Activated B cell treated with CpG ODN at 0.5 μM for 24 hours (primary cell): ENCODE measurements at regions of chr2 and their contacts with region 1.

Region 1: DNA sequence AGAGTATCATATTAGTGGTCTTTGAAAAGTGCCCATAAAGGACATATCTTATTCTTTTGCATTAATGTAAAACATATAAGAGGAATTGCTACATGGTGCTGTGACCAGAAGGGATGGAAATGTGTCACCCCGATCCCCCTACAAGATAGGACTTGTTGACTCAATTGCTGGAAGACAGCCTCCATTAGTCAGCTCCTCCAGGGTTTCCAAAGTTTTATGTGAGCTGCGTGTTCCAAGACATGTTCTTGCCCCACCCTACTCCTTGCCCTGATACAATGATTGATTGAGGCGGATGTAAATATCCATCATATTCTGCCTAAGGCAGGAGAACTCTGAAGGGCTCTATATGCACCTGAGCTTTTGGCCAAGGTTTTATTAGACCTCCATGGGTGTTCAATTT is 541.0 kb upstream of the ZEB2 start:
- DNase-seq: no peak
- ATAC-seq: no peak
- H3K4me3 Mint-ChIP-seq: no peak overlapping the region
- H3K27ac Mint-ChIP-seq: no peak overlapping the region
- H3K4me1 Mint-ChIP-seq: no peaks in the 10 kb centered on the region
- H3K27me3 Mint-ChIP-seq: no peaks in the 10 kb centered on the region
- CTCF ChIP-seq: no peak

Region 2: DNA sequence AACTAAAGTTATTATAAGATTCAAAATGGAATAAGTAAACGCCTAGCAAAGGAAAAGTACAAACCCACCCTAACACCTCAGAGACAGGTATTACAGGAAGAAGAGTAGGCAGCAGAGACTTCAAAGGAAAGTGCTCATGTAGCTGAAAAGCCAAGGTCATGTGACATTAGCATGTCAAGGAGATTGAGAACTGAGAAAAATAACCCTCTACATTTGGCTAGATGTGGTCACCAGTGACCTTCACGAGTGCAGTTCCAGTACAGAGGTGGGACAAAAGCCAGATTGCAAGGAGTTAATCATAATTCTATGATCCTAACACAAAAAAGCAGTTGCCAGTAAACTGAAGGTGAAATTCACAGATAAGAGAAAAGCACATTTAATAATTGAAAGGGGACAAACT is 793.6 kb before region 1 on chr2:
- CTCF ChIA-PET with region 1: no interaction called
- POLR2A ChIA-PET with region 1: no interaction called
- intact Hi-C with region 1: no loop called
- DNase-seq: no peak
- ATAC-seq: no peak
- H3K4me3 Mint-ChIP-seq: no peak overlapping the region
- H3K27ac Mint-ChIP-seq: no peak overlapping the region
- H3K4me1 Mint-ChIP-seq: peaks cover 30% of the 10 kb centered on the region
- H3K27me3 Mint-ChIP-seq: no peaks in the 10 kb centered on the region
- CTCF ChIP-seq: no peak

Region 3: DNA sequence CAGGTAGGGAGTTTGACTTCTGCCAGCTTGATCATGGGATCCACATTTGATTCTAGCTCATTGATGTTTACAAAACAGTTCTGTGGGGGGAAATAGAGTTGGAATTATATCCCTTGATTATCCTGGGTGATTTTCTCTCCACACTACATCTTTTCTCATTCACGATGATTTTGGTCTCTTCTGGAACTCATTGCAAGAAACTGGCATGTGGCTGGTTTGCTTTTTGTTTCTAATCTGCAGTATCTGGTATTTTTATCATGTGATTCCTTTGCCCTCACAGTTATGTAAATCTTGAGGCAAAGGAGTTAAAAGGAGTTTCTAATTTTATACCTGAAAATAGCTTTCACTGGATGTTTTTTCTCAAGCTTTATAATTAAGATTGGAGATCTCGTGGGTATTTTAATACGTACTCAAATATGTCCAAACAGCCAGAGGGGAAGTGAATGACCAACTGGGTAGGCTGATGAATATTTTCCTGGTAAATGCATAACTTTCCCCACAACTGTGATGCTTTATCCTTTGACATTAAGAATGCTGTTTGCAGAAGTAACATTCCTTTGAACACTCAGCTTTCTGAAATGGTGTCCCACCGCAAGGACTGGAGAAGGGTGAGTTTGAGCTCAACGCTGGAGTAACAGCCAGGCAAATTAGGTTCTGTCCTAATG is 38.1 kb before region 1 on chr2:
- CTCF ChIA-PET with region 1: no interaction called
- POLR2A ChIA-PET with region 1: no interaction called
- intact Hi-C with region 1: no loop called
- DNase-seq: no peak
- ATAC-seq: no peak
- H3K4me3 Mint-ChIP-seq: no peak overlapping the region
- H3K27ac Mint-ChIP-seq: no peak overlapping the region
- H3K4me1 Mint-ChIP-seq: peaks cover 21% of the 10 kb centered on the region
- H3K27me3 Mint-ChIP-seq: no peaks in the 10 kb centered on the region
- CTCF ChIP-seq: no peak

Region 4: GRCh38 chr2:145043399-145043834 is 17.5 kb before region 1 on chr2:
- CTCF ChIA-PET with region 1: no interaction called
- POLR2A ChIA-PET with region 1: no interaction called
- intact Hi-C with region 1: loop called (anchors 1 kb)
- DNase-seq: no peak
- ATAC-seq: no peak
- H3K4me3 Mint-ChIP-seq: no peak overlapping the region
- H3K27ac Mint-ChIP-seq: no peak overlapping the region
- H3K4me1 Mint-ChIP-seq: no peaks in the 10 kb centered on the region
- H3K27me3 Mint-ChIP-seq: no peaks in the 10 kb centered on the region
- CTCF ChIP-seq: no peak

Region 5: GRCh38 chr2:145287736-145288135 is 226.9 kb after region 1 on chr2:
- CTCF ChIA-PET with region 1: no interaction called
- POLR2A ChIA-PET with region 1: no interaction called
- intact Hi-C with region 1: no loop called
- DNase-seq: no peak
- ATAC-seq: no peak
- H3K4me3 Mint-ChIP-seq: no peak overlapping the region
- H3K27ac Mint-ChIP-seq: no peak overlapping the region
- H3K4me1 Mint-ChIP-seq: peaks cover 5% of the 10 kb centered on the region
- H3K27me3 Mint-ChIP-seq: no peaks in the 10 kb centered on the region
- CTCF ChIP-seq: no peak